ENCODE measurements at regions of chr10 and their contacts with region 1.

Region 1: GRCh38 chr10:65751218-65751617 is 1174.6 kb upstream of the LRRTM3 start:
- DNase-seq: no peak
- H3K4me3 ChIP-seq: no peak overlapping the region
- CTCF ChIP-seq: no peak
- POLR2A ChIP-seq: no peak

Region 2: GRCh38 chr10:65765006-65765541 is 13.9 kb after region 1 on chr10:
- intact Hi-C with region 1: no loop called
- DNase-seq: no peak
- H3K4me3 ChIP-seq: no peak overlapping the region
- CTCF ChIP-seq: no peak
- POLR2A ChIP-seq: no peak

Region 3: DNA sequence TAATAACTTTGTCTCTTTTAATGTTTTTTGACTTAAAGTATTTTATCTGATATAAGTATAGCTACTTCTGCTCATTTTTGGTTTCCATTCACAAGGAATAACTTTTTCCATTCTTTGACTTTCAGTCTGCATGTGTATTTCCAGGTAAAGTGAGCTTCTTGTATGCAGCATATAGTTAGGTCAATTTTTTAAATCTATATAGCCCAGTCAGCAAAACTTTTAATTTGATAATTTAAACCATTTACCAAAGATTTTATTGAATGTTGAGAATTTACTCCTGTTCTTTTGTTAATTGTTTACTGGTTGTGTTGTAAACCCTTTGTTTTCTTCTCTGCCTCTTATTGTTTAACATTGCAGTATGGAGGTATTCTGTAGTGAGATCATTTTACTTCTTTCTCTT is 477.7 kb after region 1 on chr10:
- intact Hi-C with region 1: loop called (anchors 5 kb)
- DNase-seq: no peak
- H3K4me3 ChIP-seq: no peak overlapping the region
- CTCF ChIP-seq: no peak
- POLR2A ChIP-seq: no peak